ENCODE measurements at regions of chr9 and their contacts with region 1.

Region 1: GRCh38 chr9:15416880-15417279 is 5.8 kb upstream of the SNAPC3 start:
- DNase-seq: no peak
- ATAC-seq: peak in 1 of 4 donors; percentile 40
- H3K4me3 ChIP-seq: no peak overlapping the region
- H3K27ac ChIP-seq: no peak overlapping the region
- H3K4me1 ChIP-seq: no peaks in the 10 kb centered on the region
- H3K27me3 ChIP-seq: no peaks in the 10 kb centered on the region
- CTCF ChIP-seq: peak; percentile 18

Region 2: GRCh38 chr9:15211160-15211814 is 205.6 kb before region 1 on chr9:
- intact Hi-C with region 1: loop called in 1 of 2 experiments (anchors 5 kb)
- DNase-seq: no peak
- ATAC-seq: peak; percentile 57 to 81 (median 60)
- H3K4me3 ChIP-seq: peak overlapping the region; percentile 12
- H3K27ac ChIP-seq: no peak overlapping the region
- H3K4me1 ChIP-seq: no peaks in the 10 kb centered on the region
- H3K27me3 ChIP-seq: no peaks in the 10 kb centered on the region
- CTCF ChIP-seq: peak; percentile 86

Region 3: DNA sequence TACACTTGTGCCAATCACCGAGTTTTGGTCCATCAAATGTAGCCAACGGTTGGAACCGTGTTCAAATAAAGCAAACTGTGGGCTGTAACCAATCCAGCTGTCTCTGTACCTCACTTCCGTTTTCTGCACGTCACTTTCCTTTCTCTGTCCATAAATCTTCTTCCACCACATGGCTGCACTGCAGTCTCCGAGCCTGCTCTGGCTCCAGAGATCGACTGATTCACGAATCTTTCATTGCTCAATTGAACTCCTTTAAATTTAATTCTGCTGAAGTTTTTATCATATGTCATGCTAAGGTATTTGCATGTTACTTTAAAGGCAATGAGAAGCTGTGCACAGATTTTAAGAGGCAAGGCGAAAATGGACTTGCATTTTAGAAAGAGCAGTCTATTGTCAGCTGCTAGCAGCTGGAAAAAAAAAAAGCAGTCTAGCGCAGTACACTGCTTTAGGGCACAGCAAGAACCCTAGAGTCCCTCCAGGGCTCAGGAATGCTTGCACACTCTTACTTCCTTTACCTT is 123.0 kb before region 1 on chr9:
- intact Hi-C with region 1: loop called in 1 of 2 experiments (anchors 5 kb)
- DNase-seq: no peak
- ATAC-seq: no peak
- H3K4me3 ChIP-seq: peak overlapping the region; percentile 20
- H3K27ac ChIP-seq: peak overlapping the region; percentile 11
- H3K4me1 ChIP-seq: peaks cover 16% of the 10 kb centered on the region
- H3K27me3 ChIP-seq: no peaks in the 10 kb centered on the region
- CTCF ChIP-seq: no peak

Region 4: GRCh38 chr9:15453956-15454355 is 37.1 kb after region 1 on chr9:
- intact Hi-C with region 1: no loop called
- DNase-seq: no peak
- ATAC-seq: no peak
- H3K4me3 ChIP-seq: no peak overlapping the region
- H3K27ac ChIP-seq: no peak overlapping the region
- H3K4me1 ChIP-seq: no peaks in the 10 kb centered on the region
- H3K27me3 ChIP-seq: no peaks in the 10 kb centered on the region
- CTCF ChIP-seq: no peak

Region 5: GRCh38 chr9:15592317-15592716 is 175.4 kb after region 1 on chr9:
- intact Hi-C with region 1: no loop called
- DNase-seq: no peak
- ATAC-seq: no peak
- H3K4me3 ChIP-seq: no peak overlapping the region
- H3K27ac ChIP-seq: no peak overlapping the region
- H3K4me1 ChIP-seq: no peaks in the 10 kb centered on the region
- H3K27me3 ChIP-seq: no peaks in the 10 kb centered on the region
- CTCF ChIP-seq: no peak

Measured in psoas muscle (tissue), 8 donors.